Activated CD8-positive, alpha-beta T cell treated with anti-CD3 and anti-CD28 coated beads, Interleukin-2, amount 10 ng/mL, durations not matched to agents 7 days and 5 days (primary cell): ENCODE measurements at regions of chr3 and their contacts with region 1.

Region 1: DNA sequence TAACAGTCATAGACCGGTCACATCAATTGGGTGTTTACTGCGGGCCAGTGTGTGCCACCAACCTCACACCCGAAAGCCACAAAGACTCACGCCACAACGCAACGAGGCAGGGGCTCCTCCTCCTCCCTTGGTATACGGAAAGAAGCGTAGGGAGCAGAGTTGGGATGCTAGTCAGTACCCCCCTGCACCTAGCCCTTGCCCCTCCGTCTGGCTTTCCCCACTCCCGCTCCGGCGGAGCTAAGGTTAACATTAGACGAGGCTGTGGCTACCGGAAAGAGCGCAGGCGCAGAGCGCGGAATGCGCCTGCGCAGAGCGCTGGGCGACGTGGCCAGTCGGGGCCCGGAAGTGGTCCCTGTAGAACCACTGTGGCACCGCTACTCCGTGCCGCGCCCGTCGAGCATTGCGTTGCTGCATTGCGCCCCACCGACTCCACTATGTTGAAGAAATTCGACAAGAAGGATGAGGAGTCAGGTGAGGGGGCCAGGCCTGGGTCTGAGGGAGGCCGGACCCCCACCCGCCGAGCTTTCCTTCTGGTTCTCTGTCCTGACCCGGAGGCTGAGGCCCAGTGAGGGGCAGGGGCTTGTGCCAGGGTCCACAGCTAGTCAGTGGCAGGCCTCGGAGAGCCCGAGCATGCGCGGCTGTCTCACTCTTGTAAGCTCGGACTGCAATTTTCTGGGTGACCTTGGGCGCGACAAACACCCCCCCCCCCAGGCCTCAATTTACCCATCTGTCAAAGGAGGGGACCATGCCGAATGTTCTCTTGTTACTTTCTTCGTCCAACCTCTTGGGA is at the start of gene COPG1:
- DNase-seq: peak; percentile 90
- ATAC-seq: peak; percentile 87
- H3K4me3 Mint-ChIP-seq: peak within 1 kb of the TSS; percentile 88
- H3K27ac Mint-ChIP-seq: peak within 1 kb of the TSS; percentile 94
- H3K4me1 Mint-ChIP-seq: peaks cover 43% of the 10 kb centered on the region
- H3K27me3 Mint-ChIP-seq: no peaks in the 10 kb centered on the region
- total RNA-seq, gene COPG1: 135 to 140 TPM

Region 2: DNA sequence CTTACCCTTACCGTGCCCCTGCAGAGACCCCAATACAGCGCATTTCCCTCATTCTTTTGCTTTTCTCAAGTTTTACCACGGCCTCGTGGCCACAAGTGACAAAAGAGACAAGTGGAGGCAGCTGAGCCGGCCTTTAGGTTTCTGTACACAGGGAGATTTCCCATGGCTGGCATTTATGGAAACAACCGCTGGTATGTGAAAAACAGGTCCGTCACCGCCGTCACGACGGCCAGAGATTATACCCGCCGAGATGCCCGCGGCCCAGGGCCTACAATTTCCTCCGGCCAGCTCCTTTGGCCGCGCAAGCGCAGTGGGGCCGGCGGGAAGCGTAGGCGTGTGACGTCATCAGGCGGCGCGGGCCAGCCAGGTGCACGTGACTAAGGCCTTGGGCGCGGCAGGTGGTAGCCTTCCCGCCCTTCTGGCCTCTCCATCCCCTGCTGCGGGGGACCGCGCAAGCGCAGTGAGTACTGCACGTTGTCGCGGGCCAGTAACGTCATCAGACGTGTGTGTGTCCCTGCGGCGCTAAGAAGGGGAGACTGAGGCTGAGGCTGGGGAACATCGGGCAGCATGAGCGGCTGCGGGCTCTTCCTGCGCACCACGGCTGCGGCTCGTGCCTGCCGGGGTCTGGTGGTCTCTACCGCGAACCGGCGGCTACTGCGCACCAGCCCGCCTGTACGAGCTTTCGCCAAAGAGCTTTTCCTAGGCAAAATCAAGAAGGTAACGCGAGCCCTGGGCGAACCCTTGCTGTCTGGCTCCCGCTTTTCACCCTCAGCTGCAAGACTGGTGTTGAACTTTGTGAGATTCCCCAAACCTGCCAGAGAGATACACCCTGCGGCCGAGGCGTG is 370.1 kb before region 1 on chr3 and contains the start of gene ACAD9:
- CTCF ChIA-PET with region 1: interaction called, 11 read pairs
- POLR2A ChIA-PET with region 1: no interaction called
- DNase-seq: peak; percentile 97
- ATAC-seq: peak; percentile 96
- H3K4me3 Mint-ChIP-seq: peak within 1 kb of the TSS; percentile 83
- H3K27ac Mint-ChIP-seq: peak within 1 kb of the TSS; percentile 90
- H3K4me1 Mint-ChIP-seq: peaks cover 57% of the 10 kb centered on the region
- H3K27me3 Mint-ChIP-seq: peaks cover 4% of the 10 kb centered on the region
- total RNA-seq, gene ACAD9: 61.3 to 68.3 TPM

Region 3: GRCh38 chr3:129052675-129053074 is 196.8 kb before region 1 on chr3:
- CTCF ChIA-PET with region 1: interaction called, 78 read pairs
- POLR2A ChIA-PET with region 1: interaction called, 4 read pairs
- DNase-seq: no peak
- ATAC-seq: no peak
- H3K4me3 Mint-ChIP-seq: no peak overlapping the region
- H3K27ac Mint-ChIP-seq: no peak overlapping the region
- H3K4me1 Mint-ChIP-seq: peaks cover 8% of the 10 kb centered on the region
- H3K27me3 Mint-ChIP-seq: peaks cover 12% of the 10 kb centered on the region

Region 4: DNA sequence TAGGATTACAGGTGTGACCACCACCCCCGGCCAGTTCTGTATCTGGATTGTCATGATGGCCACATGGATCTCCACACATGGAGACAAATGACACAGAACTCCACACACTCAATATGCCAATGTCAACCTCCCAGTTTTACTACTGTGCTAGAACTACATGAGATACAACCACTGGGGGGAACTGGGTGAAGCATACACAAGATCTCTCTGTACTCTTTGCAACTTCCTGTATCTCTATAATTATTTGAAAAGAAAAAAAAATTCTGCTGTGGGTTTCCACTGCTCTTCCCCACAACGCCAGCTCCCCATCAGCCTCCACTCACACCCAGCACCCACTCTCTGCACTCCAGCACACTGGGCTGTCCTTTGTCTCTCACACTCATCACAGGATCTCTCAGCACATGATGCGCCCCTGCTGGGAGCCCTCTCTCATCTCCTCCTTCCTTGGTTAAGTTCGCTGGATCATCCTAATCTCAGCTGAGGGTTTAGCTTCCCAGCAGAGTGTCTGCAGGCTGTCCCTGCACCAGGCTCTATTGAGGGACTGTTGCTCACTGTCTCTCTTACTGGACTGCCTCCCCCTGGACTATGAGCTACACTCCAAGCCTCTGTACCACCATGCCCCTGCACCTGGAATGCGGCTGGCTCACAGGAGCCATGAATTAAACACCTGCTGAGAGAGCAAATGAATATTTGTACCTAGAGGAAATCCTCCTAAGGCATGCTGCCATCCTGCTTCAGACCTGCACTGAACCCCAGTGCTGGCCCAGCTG is 117.2 kb before region 1 on chr3:
- CTCF ChIA-PET with region 1: interaction called, 13 read pairs
- POLR2A ChIA-PET with region 1: no interaction called
- DNase-seq: no peak
- ATAC-seq: peak; percentile 31
- H3K4me3 Mint-ChIP-seq: no peak overlapping the region
- H3K27ac Mint-ChIP-seq: peak overlapping the region; percentile 48
- H3K4me1 Mint-ChIP-seq: peaks cover 11% of the 10 kb centered on the region
- H3K27me3 Mint-ChIP-seq: no peaks in the 10 kb centered on the region

Region 5: GRCh38 chr3:129176051-129176450 is 73.4 kb before region 1 on chr3:
- CTCF ChIA-PET with region 1: interaction called, 14 read pairs
- POLR2A ChIA-PET with region 1: no interaction called
- DNase-seq: no peak
- ATAC-seq: no peak
- H3K4me3 Mint-ChIP-seq: no peak overlapping the region
- H3K27ac Mint-ChIP-seq: peak overlapping the region; percentile 23
- H3K4me1 Mint-ChIP-seq: peaks cover 72% of the 10 kb centered on the region
- H3K27me3 Mint-ChIP-seq: no peaks in the 10 kb centered on the region

Region 6: DNA sequence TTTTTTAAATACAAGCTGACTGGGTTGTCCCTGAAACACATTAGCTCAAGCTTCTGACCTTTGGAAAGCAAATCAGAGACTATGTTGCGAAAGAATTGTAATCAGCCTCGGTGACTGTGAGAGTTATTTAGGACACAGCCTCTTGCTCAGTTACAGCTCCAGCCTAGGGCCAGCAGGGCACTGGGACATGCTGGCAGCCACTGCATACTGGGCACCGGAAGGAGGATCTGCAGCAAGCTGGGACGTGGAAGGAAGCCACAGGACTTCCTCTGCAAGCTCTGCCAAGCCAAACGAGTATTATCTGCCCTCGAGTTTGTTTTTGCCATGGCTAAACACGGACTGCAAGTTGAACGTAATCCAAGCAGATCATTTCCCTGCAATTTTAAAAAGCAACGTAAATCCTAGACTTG is 24.5 kb before region 1 on chr3:
- CTCF ChIA-PET with region 1: interaction called, 30 read pairs
- POLR2A ChIA-PET with region 1: interaction called, 3 read pairs
- DNase-seq: peak; percentile 48
- ATAC-seq: peak; percentile 77
- H3K4me3 Mint-ChIP-seq: peak overlapping the region; percentile 57
- H3K27ac Mint-ChIP-seq: peak overlapping the region; percentile 86
- H3K4me1 Mint-ChIP-seq: peaks cover 47% of the 10 kb centered on the region
- H3K27me3 Mint-ChIP-seq: no peaks in the 10 kb centered on the region

Region 7: GRCh38 chr3:129238945-129239706 is 10.3 kb before region 1 on chr3:
- CTCF ChIA-PET with region 1: interaction called, 10 read pairs
- POLR2A ChIA-PET with region 1: interaction called, 19 read pairs
- DNase-seq: peak; percentile 70
- ATAC-seq: peak; percentile 80
- H3K4me3 Mint-ChIP-seq: peak overlapping the region; percentile 69
- H3K27ac Mint-ChIP-seq: peak overlapping the region; percentile 93
- H3K4me1 Mint-ChIP-seq: peaks cover 53% of the 10 kb centered on the region
- H3K27me3 Mint-ChIP-seq: no peaks in the 10 kb centered on the region

Region 8: GRCh38 chr3:129336093-129336709 is 86.7 kb after region 1 on chr3:
- CTCF ChIA-PET with region 1: no interaction called
- POLR2A ChIA-PET with region 1: no interaction called
- DNase-seq: no peak
- ATAC-seq: no peak
- H3K4me3 Mint-ChIP-seq: no peak overlapping the region
- H3K27ac Mint-ChIP-seq: no peak overlapping the region
- H3K4me1 Mint-ChIP-seq: no peaks in the 10 kb centered on the region
- H3K27me3 Mint-ChIP-seq: no peaks in the 10 kb centered on the region